ENCODE measurements at regions of chr14 and their contacts with region 1.

Region 1: DNA sequence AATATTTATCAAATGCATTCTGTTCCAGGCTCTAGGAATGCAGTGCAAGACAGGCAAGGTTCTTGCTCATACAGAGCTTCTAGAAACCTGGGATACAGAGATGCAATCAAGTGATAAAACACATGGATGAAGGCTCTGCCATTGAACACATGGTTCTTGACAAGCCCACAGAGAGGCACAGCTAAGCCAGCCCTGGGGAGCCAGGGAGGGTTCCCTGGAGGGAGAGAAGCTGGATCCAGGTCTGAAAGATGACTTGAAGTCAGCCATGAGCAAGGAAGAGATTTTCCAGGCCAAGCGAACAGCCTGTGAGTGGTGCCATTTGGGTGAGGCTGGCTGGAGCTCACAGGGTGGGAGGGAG is 66.2 kb downstream of the IRF2BPL start:
- DNase-seq: no peak
- ATAC-seq: no peak
- H3K4me3 ChIP-seq: peak overlapping the region; percentile 82
- H3K4me3 Mint-ChIP-seq: peak overlapping the region; percentile 74 to 86 (median 84)
- H3K27ac ChIP-seq: peak overlapping the region; percentile 87
- H3K27ac Mint-ChIP-seq: peak overlapping the region; percentile 87 to 99 (median 91)
- H3K4me1 ChIP-seq: peaks cover 39 to 59% of the 10 kb centered on the region in 2 donors
- H3K4me1 Mint-ChIP-seq: peaks cover 41 to 89% (median 79%) of the 10 kb centered on the region in 7 donors
- H3K27me3 ChIP-seq: no peaks in the 10 kb centered on the region
- H3K27me3 Mint-ChIP-seq: peaks cover 0 to 8% (median 0%) of the 10 kb centered on the region in 5 donors

Region 2: GRCh38 chr14:76432827-76433752 is 529.2 kb before region 1 on chr14:
- CTCF ChIA-PET with region 1: no interaction called
- POLR2A ChIA-PET with region 1: no interaction called
- intact Hi-C with region 1: no loop called
- DNase-seq: no peak
- ATAC-seq: no peak
- H3K4me3 ChIP-seq: no peak overlapping the region
- H3K4me3 Mint-ChIP-seq: no peak overlapping the region
- H3K27ac ChIP-seq: no peak overlapping the region
- H3K27ac Mint-ChIP-seq: no peak overlapping the region
- H3K4me1 ChIP-seq: no peaks in the 10 kb centered on the region
- H3K4me1 Mint-ChIP-seq: no peaks in the 10 kb centered on the region
- H3K27me3 ChIP-seq: no peaks in the 10 kb centered on the region
- H3K27me3 Mint-ChIP-seq: peaks cover 0 to 33% (median 10%) of the 10 kb centered on the region in 5 donors

Region 3: GRCh38 chr14:76918751-76919543 is 43.3 kb before region 1 on chr14:
- CTCF ChIA-PET with region 1: interaction called, 20 read pairs
- POLR2A ChIA-PET with region 1: interaction called, 8 read pairs
- intact Hi-C with region 1: no loop called
- DNase-seq: no peak
- ATAC-seq: no peak
- H3K4me3 ChIP-seq: no peak overlapping the region
- H3K4me3 Mint-ChIP-seq: peak overlapping the region in 6 of 10 donors; percentile 27 to 67 (median 56)
- H3K27ac ChIP-seq: no peak overlapping the region
- H3K27ac Mint-ChIP-seq: peak overlapping the region in 2 of 9 donors; percentile 25 to 40
- H3K4me1 ChIP-seq: peaks cover 0 to 27% of the 10 kb centered on the region in 2 donors
- H3K4me1 Mint-ChIP-seq: peaks cover 12 to 65% (median 55%) of the 10 kb centered on the region in 7 donors
- H3K27me3 ChIP-seq: no peaks in the 10 kb centered on the region
- H3K27me3 Mint-ChIP-seq: peaks cover 0 to 1% (median 0%) of the 10 kb centered on the region in 5 donors

Region 4: DNA sequence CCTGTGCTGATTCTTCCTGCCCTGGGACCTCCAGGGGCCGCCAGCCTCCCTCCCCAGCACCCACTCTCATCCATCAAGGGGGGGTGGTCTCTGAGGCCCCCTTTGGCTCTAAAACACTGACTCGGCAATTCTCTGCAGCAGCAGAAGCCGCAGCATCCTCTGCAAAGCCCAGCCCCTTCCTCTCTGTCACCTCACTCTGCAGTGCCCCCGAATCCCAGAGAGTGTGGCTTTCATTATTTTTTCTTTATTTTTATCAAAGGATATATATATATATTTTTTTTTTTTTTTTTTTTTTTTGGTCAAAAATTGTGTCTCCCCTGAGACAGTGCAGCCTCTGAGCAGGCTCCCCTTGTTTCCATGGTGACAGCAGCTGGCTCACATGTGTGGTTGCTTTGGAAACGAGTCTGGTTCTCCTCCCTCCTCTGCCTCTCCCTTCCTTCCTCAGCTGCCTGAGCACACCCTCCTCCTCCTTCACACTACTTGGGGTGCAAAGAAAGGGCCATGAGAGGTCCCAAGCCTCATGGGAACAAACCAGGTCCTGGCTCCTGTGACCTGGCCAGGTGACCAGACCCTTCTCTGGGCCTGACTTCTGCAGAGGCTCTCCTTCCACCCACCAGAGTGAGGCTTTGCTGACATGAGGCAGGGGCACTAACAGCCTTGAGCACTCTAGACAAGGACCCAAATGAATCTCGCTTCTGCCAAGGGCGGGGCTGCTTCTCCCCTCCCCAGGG is 35.6 kb before region 1 on chr14:
- CTCF ChIA-PET with region 1: interaction called, 14 read pairs
- POLR2A ChIA-PET with region 1: interaction called, 14 read pairs
- intact Hi-C with region 1: loop called (anchors 1 kb)
- DNase-seq: peak in 8 of 9 donors; percentile 50 to 90 (median 69)
- ATAC-seq: peak; percentile 73
- H3K4me3 ChIP-seq: peak overlapping the region; percentile 6
- H3K4me3 Mint-ChIP-seq: peak overlapping the region; percentile 65 to 88 (median 80)
- H3K27ac ChIP-seq: peak overlapping the region; percentile 65
- H3K27ac Mint-ChIP-seq: peak overlapping the region; percentile 56 to 96 (median 90)
- H3K4me1 ChIP-seq: peaks cover 52 to 72% of the 10 kb centered on the region in 2 donors
- H3K4me1 Mint-ChIP-seq: peaks cover 50 to 96% (median 86%) of the 10 kb centered on the region in 7 donors
- H3K27me3 ChIP-seq: no peaks in the 10 kb centered on the region
- H3K27me3 Mint-ChIP-seq: no peaks in the 10 kb centered on the region

Region 5: GRCh38 chr14:76977793-76978720 is 15.8 kb after region 1 on chr14:
- CTCF ChIA-PET with region 1: interaction called, 3 read pairs
- POLR2A ChIA-PET with region 1: interaction called, 13 read pairs
- intact Hi-C with region 1: loop called (anchors 1 to 2 kb)
- DNase-seq: peak; percentile 40 to 90 (median 65)
- ATAC-seq: peak; percentile 97
- H3K4me3 ChIP-seq: no peak overlapping the region
- H3K4me3 Mint-ChIP-seq: peak overlapping the region in 7 of 10 donors; percentile 1 to 57 (median 35)
- H3K27ac ChIP-seq: peak overlapping the region; percentile 50
- H3K27ac Mint-ChIP-seq: peak overlapping the region; percentile 29 to 88 (median 82)
- H3K4me1 ChIP-seq: peaks cover 12 to 15% of the 10 kb centered on the region in 2 donors
- H3K4me1 Mint-ChIP-seq: peaks cover 0 to 25% (median 16%) of the 10 kb centered on the region in 7 donors
- H3K27me3 ChIP-seq: no peaks in the 10 kb centered on the region
- H3K27me3 Mint-ChIP-seq: no peaks in the 10 kb centered on the region

Region 6: DNA sequence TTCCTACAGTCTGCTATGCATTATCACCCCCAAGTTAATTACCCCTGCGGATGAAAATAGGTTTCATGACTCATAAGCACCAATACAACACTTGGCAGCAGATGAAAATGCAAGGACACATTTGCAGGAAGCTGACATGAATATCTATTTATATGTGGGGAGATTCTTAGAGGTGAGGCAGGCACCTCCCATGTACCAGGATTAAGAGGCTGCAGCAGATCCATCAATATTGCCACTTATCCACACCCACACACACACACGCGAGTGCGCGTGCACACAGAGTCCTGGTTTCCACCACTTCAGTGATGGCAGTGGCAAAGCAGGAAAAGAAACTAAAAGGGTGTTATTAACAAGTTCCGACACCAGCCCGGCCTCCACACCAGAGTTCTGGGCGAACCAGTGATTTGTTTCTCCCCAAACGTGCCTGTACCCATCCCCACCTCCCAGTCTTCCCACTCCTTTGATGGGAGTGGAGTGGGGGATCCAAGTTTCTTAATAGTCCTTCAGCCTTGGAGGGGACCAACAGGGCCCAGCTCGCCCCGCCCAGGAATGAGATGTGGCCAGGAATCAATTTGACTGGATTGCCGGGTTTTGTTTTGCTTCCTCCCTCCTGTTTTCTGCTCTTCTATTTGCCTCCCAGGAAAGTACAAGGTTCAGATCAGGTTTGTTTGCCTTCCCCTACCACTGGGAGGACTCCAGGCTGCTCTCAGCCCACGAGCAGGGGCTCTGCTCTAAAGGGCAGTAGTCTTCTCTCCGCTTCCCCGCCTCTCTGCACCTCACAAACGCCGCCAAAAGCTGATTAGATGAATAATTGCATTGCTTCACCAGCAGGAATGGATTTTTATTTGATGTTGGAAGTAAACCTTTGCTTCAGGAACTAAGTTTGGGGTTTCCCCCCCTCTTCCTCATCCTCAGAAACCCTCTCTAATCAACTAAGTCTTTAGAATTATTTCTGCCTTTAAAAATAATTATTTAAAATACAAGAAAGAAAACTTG is 61.0 kb after region 1 on chr14:
- CTCF ChIA-PET with region 1: interaction called, 17 read pairs
- POLR2A ChIA-PET with region 1: interaction called, 29 read pairs
- intact Hi-C with region 1: loop called (anchors 1 kb)
- DNase-seq: peak in 1 of 9 donors; percentile 44
- ATAC-seq: no peak
- H3K4me3 ChIP-seq: no peak overlapping the region
- H3K4me3 Mint-ChIP-seq: peak overlapping the region in 9 of 10 donors; percentile 1 to 81 (median 42)
- H3K27ac ChIP-seq: no peak overlapping the region
- H3K27ac Mint-ChIP-seq: peak overlapping the region in 8 of 9 donors; percentile 3 to 86 (median 58)
- H3K4me1 ChIP-seq: peaks cover 28 to 32% of the 10 kb centered on the region in 2 donors
- H3K4me1 Mint-ChIP-seq: peaks cover 12 to 42% (median 36%) of the 10 kb centered on the region in 7 donors
- H3K27me3 ChIP-seq: no peaks in the 10 kb centered on the region
- H3K27me3 Mint-ChIP-seq: no peaks in the 10 kb centered on the region

Region 7: DNA sequence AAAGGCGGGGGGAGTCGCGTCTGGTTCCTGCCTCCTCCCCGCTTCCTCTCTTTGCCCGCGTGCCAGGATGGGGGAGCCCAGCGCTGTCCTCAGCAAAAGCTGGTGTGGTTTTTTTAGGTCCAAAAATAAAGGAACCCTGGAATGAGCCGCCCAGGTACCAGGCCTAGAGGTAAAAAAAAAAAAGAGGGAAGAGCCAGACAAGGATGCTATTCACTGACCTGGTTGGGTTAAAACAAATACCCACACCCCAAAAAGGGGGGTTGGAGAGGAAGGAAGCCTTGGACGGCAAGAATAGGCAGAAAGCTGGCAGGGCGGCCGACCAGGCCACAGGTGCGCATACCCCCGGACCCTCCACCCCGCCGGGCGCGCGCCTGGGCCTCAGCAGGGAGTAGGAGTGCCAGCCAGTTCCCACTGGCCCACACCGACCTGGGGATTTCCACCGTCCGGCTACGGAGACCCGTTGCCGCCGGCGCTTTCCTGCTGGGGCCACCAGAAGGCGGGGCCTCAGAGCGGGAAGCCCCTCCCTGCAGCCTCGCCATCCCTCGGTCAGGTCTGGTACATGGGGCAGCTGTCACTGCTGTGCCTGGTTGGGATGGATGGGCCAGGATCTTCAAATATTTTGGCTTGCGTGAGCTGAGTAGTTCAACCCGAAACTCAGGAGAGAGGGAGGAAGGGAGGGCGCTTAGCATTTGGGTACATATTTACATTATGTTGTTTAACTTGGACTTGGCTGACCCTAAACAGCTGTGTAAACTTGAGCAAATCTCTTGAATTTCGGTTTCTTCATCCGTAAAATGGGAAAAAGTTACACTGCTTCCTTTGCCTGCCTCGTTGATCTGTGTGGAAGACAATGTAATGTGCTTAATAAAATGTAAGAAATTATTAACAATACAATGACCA is 71.6 kb after region 1 on chr14:
- CTCF ChIA-PET with region 1: interaction called, 4 read pairs
- POLR2A ChIA-PET with region 1: interaction called, 76 read pairs
- intact Hi-C with region 1: no loop called
- DNase-seq: peak in 7 of 9 donors; percentile 32 to 89 (median 47)
- ATAC-seq: peak; percentile 76
- H3K4me3 ChIP-seq: peak overlapping the region; percentile 79
- H3K4me3 Mint-ChIP-seq: peak overlapping the region; percentile 81 to 93 (median 90)
- H3K27ac ChIP-seq: peak overlapping the region; percentile 95
- H3K27ac Mint-ChIP-seq: peak overlapping the region; percentile 92 to 98 (median 94)
- H3K4me1 ChIP-seq: peaks cover 37 to 67% of the 10 kb centered on the region in 2 donors
- H3K4me1 Mint-ChIP-seq: peaks cover 45 to 85% (median 78%) of the 10 kb centered on the region in 7 donors
- H3K27me3 ChIP-seq: no peaks in the 10 kb centered on the region
- H3K27me3 Mint-ChIP-seq: no peaks in the 10 kb centered on the region

Region 8: GRCh38 chr14:77040059-77040740 is 77.9 kb after region 1 on chr14:
- CTCF ChIA-PET with region 1: interaction called, 10 read pairs
- POLR2A ChIA-PET with region 1: interaction called, 76 read pairs
- intact Hi-C with region 1: loop called (anchors 1 kb)
- DNase-seq: peak; percentile 86 to 99 (median 99)
- ATAC-seq: peak; percentile 87
- H3K4me3 ChIP-seq: peak overlapping the region; percentile 78
- H3K4me3 Mint-ChIP-seq: peak overlapping the region; percentile 76 to 97 (median 87)
- H3K27ac ChIP-seq: peak overlapping the region; percentile 97
- H3K27ac Mint-ChIP-seq: peak overlapping the region; percentile 97 to 100 (median 99)
- H3K4me1 ChIP-seq: peaks cover 57 to 77% of the 10 kb centered on the region in 2 donors
- H3K4me1 Mint-ChIP-seq: peaks cover 50 to 97% (median 89%) of the 10 kb centered on the region in 7 donors
- H3K27me3 ChIP-seq: no peaks in the 10 kb centered on the region
- H3K27me3 Mint-ChIP-seq: no peaks in the 10 kb centered on the region